ENCODE measurements at regions of chr5 and their contacts with region 1.

Region 1: GRCh38 chr5:136080483-136081216 is 51.9 kb downstream of the TGFBI start:
- DNase-seq: peak; percentile 75
- H3K4me3 Mint-ChIP-seq: peak overlapping the region; percentile 77
- H3K27ac Mint-ChIP-seq: peak overlapping the region; percentile 75
- H3K4me1 Mint-ChIP-seq: peaks cover 13% of the 10 kb centered on the region
- H3K27me3 Mint-ChIP-seq: peaks cover 55% of the 10 kb centered on the region

Region 2: GRCh38 chr5:135944967-135945560 is 135.6 kb before region 1 on chr5:
- intact Hi-C with region 1: loop called (anchors 1 kb)
- DNase-seq: no peak
- H3K4me3 Mint-ChIP-seq: no peak overlapping the region
- H3K27ac Mint-ChIP-seq: no peak overlapping the region
- H3K4me1 Mint-ChIP-seq: no peaks in the 10 kb centered on the region
- H3K27me3 Mint-ChIP-seq: peaks cover 31% of the 10 kb centered on the region

Region 3: GRCh38 chr5:135977375-135977928 is 103.2 kb before region 1 on chr5:
- intact Hi-C with region 1: loop called (anchors 1 kb)
- DNase-seq: peak; percentile 47
- H3K4me3 Mint-ChIP-seq: no peak overlapping the region
- H3K27ac Mint-ChIP-seq: no peak overlapping the region
- H3K4me1 Mint-ChIP-seq: no peaks in the 10 kb centered on the region
- H3K27me3 Mint-ChIP-seq: peaks cover 29% of the 10 kb centered on the region

Region 4: GRCh38 chr5:136037001-136037705 is 43.5 kb before region 1 on chr5:
- intact Hi-C with region 1: loop called (anchors 1 kb)
- DNase-seq: peak; percentile 15
- H3K4me3 Mint-ChIP-seq: no peak overlapping the region
- H3K27ac Mint-ChIP-seq: peak overlapping the region; percentile 61
- H3K4me1 Mint-ChIP-seq: peaks cover 20% of the 10 kb centered on the region
- H3K27me3 Mint-ChIP-seq: peaks cover 8% of the 10 kb centered on the region

Region 5: GRCh38 chr5:136132557-136133221 is 52.0 kb after region 1 on chr5 and contains the start of gene SMAD5:
- intact Hi-C with region 1: loop called (anchors 2 kb)
- DNase-seq: peak; percentile 79
- H3K4me3 Mint-ChIP-seq: peak within 1 kb of the TSS; percentile 92
- H3K27ac Mint-ChIP-seq: peak within 1 kb of the TSS; percentile 77
- H3K4me1 Mint-ChIP-seq: peaks cover 22% of the 10 kb centered on the region
- H3K27me3 Mint-ChIP-seq: peaks cover 39% of the 10 kb centered on the region
- total RNA-seq, gene SMAD5: 19.7 and 21.7 TPM in 2 replicates

Region 6: DNA sequence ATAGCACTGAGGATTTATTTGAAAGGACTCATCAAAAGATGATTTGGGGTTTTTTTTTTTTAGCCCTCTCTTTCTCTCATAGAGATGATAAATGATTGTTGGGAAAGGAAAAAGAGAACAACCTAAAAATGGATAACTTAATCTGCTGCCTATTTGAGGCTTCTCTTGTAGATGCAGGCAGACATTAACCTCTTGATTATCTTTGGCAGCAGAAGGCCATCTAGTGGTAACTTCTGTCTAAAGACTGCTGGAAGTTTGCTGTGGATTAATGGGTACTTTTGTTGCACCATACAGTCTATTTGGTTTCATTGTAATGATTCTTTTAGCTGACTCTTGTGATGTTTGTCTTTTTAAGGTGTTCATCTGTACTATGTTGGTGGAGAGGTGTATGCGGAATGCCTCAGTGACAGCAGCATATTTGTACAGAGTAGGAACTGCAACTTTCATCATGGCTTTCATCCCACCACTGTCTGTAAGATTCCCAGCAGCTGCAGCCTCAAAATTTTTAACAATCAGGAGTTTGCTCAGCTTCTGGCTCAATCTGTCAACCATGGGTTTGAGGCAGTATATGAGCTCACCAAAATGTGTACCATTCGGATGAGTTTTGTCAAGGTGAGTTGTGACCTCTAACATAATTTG is 93.5 kb after region 1 on chr5:
- intact Hi-C with region 1: loop called (anchors 2 kb)
- DNase-seq: no peak
- H3K4me3 Mint-ChIP-seq: no peak overlapping the region
- H3K27ac Mint-ChIP-seq: no peak overlapping the region
- H3K4me1 Mint-ChIP-seq: no peaks in the 10 kb centered on the region
- H3K27me3 Mint-ChIP-seq: no peaks in the 10 kb centered on the region